ENCODE measurements at regions of chr5 and their contacts with region 1.

Region 1: GRCh38 chr5:75511435-75512384 is at the starts of genes CERT1 and POLK:
- DNase-seq: peak; percentile 96
- H3K4me3 Mint-ChIP-seq: peak within 1 kb of the TSS; percentile 99
- H3K27ac Mint-ChIP-seq: peak within 1 kb of the TSS; percentile 93
- H3K4me1 Mint-ChIP-seq: peaks cover 62% of the 10 kb centered on the region
- H3K27me3 Mint-ChIP-seq: no peaks in the 10 kb centered on the region
- total RNA-seq, gene CERT1: 41.0 and 43.4 TPM in 2 replicates
- total RNA-seq, gene POLK: 38.0 and 40.4 TPM in 2 replicates

Region 2: GRCh38 chr5:75156585-75156984 is 355.1 kb before region 1 on chr5:
- intact Hi-C with region 1: no loop called
- DNase-seq: no peak
- H3K4me3 Mint-ChIP-seq: no peak overlapping the region
- H3K27ac Mint-ChIP-seq: no peak overlapping the region
- H3K4me1 Mint-ChIP-seq: no peaks in the 10 kb centered on the region
- H3K27me3 Mint-ChIP-seq: no peaks in the 10 kb centered on the region

Region 3: GRCh38 chr5:75438722-75439121 is 73.0 kb before region 1 on chr5:
- intact Hi-C with region 1: no loop called
- DNase-seq: no peak
- H3K4me3 Mint-ChIP-seq: no peak overlapping the region
- H3K27ac Mint-ChIP-seq: no peak overlapping the region
- H3K4me1 Mint-ChIP-seq: peaks cover 4% of the 10 kb centered on the region
- H3K27me3 Mint-ChIP-seq: no peaks in the 10 kb centered on the region

Region 4: GRCh38 chr5:75524071-75524470 is 12.4 kb after region 1 on chr5:
- intact Hi-C with region 1: loop called (anchors 1 kb)
- DNase-seq: no peak
- H3K4me3 Mint-ChIP-seq: peak overlapping the region; percentile 49
- H3K27ac Mint-ChIP-seq: peak overlapping the region; percentile 74
- H3K4me1 Mint-ChIP-seq: peaks cover 51% of the 10 kb centered on the region
- H3K27me3 Mint-ChIP-seq: no peaks in the 10 kb centered on the region

Region 5: GRCh38 chr5:75717082-75717922 is 205.6 kb after region 1 on chr5 and contains the start of gene POC5:
- intact Hi-C with region 1: loop called (anchors 1 kb)
- DNase-seq: peak; percentile 98
- H3K4me3 Mint-ChIP-seq: peak within 1 kb of the TSS; percentile 98
- H3K27ac Mint-ChIP-seq: peak within 1 kb of the TSS; percentile 100
- H3K4me1 Mint-ChIP-seq: peaks cover 34% of the 10 kb centered on the region
- H3K27me3 Mint-ChIP-seq: peaks cover 3% of the 10 kb centered on the region
- total RNA-seq, gene POC5: 20.7 and 24.2 TPM in 2 replicates

Measured in activated T-helper 1 cell treated with anti-CD3 and anti-CD28 coated beads, Interleukin-12 subunit alpha, Interleukin-12 subunit beta, Interleukin-2, Interleukin-4 antibody, amounts not matched to agents 30 ng/mL and 10 ng/mL and 1 ng/mL, durations not matched to agents 14 hours and 24 hours and 36 hours (primary cell).